IMR-90 (cell line): ENCODE measurements at regions of chr5 and their contacts with region 1.

Region 1: GRCh38 chr5:151480384-151481293 is 33.2 kb downstream of the SLC36A1 start:
- DNase-seq: peak; percentile 85
- ATAC-seq: peak; percentile 79
- H3K4me3 ChIP-seq: no peak overlapping the region
- H3K27ac ChIP-seq: peak overlapping the region; percentile 48; the same call in 1 of the 2 replicates
- H3K4me1 ChIP-seq: peaks cover 14% of the 10 kb centered on the region
- H3K27me3 ChIP-seq: no peaks in the 10 kb centered on the region
- CTCF ChIP-seq: peak; percentile 10; the same call in 1 of the 2 replicates
- POLR2A ChIP-seq: peak; percentile 59
- RAD21 ChIP-seq: no peak; the same call in 1 of the 2 replicates

Region 2: DNA sequence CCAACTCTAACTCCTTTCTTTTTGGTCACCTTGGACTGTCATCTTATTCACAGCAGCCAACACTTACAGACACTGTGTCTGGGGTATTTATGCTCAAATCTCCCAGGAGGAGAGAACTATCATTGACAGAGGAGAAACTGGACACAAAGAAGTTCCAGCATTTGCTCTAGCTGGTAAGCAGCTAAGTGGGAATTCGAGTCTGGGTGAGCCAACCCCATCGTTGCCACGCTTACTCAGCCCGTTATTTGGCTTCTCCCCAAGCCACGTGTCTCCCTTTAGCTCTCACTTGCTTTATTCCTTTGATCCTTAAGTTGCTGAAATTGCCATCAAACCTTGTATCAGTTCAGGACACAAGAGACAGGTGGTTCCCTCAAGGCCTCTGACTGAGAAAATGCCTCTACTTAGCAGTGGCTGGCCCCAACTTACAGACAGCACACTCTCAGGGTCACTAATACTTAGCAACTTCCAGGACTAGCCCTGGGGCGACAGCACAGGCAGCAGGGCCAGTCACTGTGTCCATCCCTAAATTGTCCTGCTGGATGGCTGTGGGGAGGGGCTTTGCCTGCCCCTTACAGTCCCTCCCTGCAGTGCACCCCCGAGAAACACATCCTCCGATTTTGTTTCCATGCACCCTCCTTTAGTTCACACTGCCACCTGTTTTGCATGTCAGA is 134.7 kb before region 1 on chr5:
- CTCF ChIA-PET with region 1: no interaction called
- POLR2A ChIA-PET with region 1: no interaction called
- dilution Hi-C with region 1: no loop called
- in situ Hi-C with region 1: no loop called
- intact Hi-C with region 1: no loop called
- DNase-seq: peak; percentile 28
- ATAC-seq: peak; percentile 53; the same call in 1 of the 2 replicates
- H3K4me3 ChIP-seq: no peak overlapping the region
- H3K27ac ChIP-seq: no peak overlapping the region
- H3K4me1 ChIP-seq: no peaks in the 10 kb centered on the region
- H3K27me3 ChIP-seq: peaks cover 5% of the 10 kb centered on the region
- CTCF ChIP-seq: no peak
- POLR2A ChIP-seq: no peak
- RAD21 ChIP-seq: no peak

Region 3: DNA sequence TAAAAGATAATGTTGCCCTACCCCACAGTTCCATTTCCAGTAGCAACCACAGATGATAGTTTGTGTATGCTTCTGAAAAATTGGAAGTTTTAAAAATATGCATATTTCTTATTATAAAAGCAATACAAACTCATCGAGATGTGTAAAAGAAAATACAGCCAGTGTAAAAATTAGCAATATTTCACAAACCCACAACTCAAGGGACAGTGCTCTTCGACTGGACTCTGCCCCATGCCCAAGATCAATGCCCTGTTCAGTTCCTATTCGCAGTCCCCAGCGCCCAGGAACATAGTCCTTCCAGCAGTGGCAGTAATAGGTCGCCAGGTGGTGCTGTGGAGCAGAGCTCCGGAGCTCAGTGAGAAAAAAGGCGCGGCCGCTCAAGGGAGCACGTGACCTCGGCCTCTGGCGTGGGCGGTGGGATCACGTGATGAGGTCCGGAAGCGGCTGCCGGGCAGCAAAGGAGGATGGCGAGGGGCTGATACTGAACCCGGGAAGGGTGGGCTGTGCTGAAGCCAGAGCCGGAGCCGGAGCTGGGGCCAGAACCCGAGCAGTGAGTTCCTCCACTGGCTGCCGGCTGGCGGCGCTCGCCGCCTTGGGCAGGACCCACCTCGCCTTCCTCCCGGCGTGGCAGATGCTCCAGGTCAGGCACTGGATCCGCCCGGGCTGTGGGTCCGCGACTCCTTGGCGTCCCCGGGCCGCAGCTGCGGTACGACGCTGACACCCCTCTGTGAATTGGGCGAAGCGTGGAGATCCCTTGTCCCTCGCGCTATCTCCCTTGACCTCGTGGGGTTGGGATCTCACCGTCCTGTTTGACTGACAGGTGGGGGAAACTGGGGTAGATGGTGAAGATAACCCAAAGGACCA is 33.2 kb before region 1 on chr5 and contains the start of gene SLC36A1:
- CTCF ChIA-PET with region 1: interaction called, 4 read pairs
- POLR2A ChIA-PET with region 1: no interaction called
- dilution Hi-C with region 1: no loop called
- in situ Hi-C with region 1: no loop called
- intact Hi-C with region 1: loop called (anchors 1 kb)
- DNase-seq: peak; percentile 86
- ATAC-seq: peak; percentile 90
- H3K4me3 ChIP-seq: peak within 1 kb of the TSS; percentile 74
- H3K27ac ChIP-seq: peak within 1 kb of the TSS; percentile 50
- H3K4me1 ChIP-seq: peaks cover 12% of the 10 kb centered on the region
- H3K27me3 ChIP-seq: peaks cover 2% of the 10 kb centered on the region; the same call in 1 of the 2 replicates
- CTCF ChIP-seq: peak; percentile 93
- POLR2A ChIP-seq: peak; percentile 41; the same call in 1 of the 2 replicates
- RAD21 ChIP-seq: peak; percentile 90
- total RNA-seq, gene SLC36A1: 5.3 and 5.7 TPM in 2 replicates

Region 4: GRCh38 chr5:151541571-151541970 is 60.9 kb after region 1 on chr5:
- CTCF ChIA-PET with region 1: no interaction called
- POLR2A ChIA-PET with region 1: no interaction called
- dilution Hi-C with region 1: no loop called
- in situ Hi-C with region 1: no loop called
- intact Hi-C with region 1: no loop called
- DNase-seq: no peak
- ATAC-seq: no peak
- H3K4me3 ChIP-seq: no peak overlapping the region
- H3K27ac ChIP-seq: no peak overlapping the region
- H3K4me1 ChIP-seq: no peaks in the 10 kb centered on the region
- H3K27me3 ChIP-seq: no peaks in the 10 kb centered on the region; the same call in 1 of the 2 replicates
- CTCF ChIP-seq: no peak
- POLR2A ChIP-seq: no peak
- RAD21 ChIP-seq: no peak